ENCODE measurements at regions of chr2 and their contacts with region 1.

Region 1: GRCh38 chr2:152583512-152584229 is 133.6 kb downstream of the PRPF40A start:
- DNase-seq: no peak
- CTCF ChIP-seq: no peak

Region 2: DNA sequence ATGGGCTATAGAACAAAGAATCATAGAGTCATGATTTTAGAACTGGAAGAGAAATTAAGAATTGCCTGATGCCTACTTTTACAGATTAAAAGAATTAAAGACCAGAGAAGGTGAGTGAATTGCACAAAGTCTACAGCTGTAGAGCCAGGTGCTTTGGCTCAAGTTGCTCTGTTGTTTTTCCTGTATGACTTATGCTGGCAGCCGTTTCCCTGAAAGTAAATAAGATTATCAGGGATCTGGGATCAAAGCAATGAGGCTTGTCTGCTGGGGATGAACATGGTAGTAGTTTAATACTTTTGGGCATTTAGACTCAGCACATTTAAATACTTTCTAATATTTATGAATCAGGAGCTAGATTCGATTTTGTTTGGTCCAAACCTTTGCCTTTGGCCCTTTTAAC is 33.3 kb before region 1 on chr2:
- CTCF ChIA-PET with region 1: no interaction called
- POLR2A ChIA-PET with region 1: no interaction called
- DNase-seq: no peak
- CTCF ChIP-seq: no peak

Region 3: DNA sequence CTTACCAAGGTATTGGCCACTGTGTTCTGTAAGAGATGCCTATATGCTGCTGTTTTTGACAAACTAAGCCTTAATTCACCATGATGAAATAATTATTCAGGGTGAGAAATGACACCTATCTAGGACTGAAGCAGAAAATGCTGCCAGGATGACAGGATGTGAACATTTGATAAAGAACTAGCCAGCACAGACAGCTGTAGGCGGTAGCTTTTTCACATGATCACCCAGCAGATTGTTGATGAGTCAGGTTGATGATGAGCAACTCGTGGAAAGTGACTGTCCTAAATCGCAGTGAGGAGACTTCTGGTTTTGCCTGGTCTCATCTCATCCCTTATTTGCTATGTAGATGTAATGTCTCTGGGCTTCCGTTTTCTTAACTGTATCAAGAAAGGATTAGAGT is 10.5 kb before region 1 on chr2:
- CTCF ChIA-PET with region 1: interaction called, 10 read pairs
- POLR2A ChIA-PET with region 1: no interaction called
- DNase-seq: peak; percentile 52
- CTCF ChIP-seq: no peak